ENCODE measurements at regions of chr21 and their contacts with region 1.

Region 1: DNA sequence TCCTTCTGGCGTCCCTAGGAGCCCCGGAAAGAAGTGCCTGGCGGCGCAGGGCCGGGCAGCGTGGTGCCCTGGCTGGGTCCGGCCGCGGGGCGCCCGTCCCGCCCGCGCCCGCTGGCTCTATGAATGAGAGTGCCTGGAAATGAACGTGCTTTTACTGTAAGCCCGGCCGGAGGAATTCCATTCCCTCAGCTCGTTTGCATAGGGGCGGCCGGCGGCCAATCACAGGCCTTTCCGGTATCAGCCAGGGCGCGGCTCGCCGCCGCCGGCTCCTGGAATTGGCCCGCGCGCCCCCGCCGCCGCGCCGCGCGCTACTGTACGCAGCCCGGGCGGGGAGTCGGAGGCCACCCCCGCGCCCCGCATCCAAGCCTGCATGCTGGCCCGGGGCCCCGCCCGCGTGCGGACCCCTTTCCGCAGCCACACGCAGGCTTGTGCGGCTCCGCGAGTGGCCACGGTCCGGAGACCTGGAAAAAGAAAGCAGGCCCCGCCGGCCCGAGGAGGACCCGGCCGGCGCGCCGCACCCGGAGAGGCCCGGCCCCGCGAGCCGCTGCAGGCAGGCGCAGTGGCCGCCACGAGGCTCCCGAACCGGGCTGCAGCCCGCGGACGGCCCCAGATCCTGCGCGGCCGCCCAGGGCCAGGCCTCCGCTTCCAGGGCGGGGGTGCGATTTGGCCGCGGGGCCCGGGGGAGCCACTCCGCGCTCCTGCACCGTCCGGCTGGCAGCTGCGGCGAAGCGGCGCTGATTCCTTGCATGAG is 160.4 kb downstream of the RUNX1 start:
- DNase-seq: peak; percentile 92
- H3K4me3 Mint-ChIP-seq: peak overlapping the region; percentile 89
- H3K27ac Mint-ChIP-seq: peak overlapping the region; percentile 100
- H3K4me1 Mint-ChIP-seq: peaks cover 44% of the 10 kb centered on the region
- H3K27me3 Mint-ChIP-seq: peaks cover 5% of the 10 kb centered on the region

Region 2: GRCh38 chr21:34807146-34807880 is 81.4 kb before region 1 on chr21:
- CTCF ChIA-PET with region 1: interaction called, 3 read pairs
- POLR2A ChIA-PET with region 1: interaction called, 10 read pairs
- intact Hi-C with region 1: loop called (anchors 1 kb)
- DNase-seq: peak; percentile 85
- H3K4me3 Mint-ChIP-seq: peak overlapping the region; percentile 57
- H3K27ac Mint-ChIP-seq: peak overlapping the region; percentile 89
- H3K4me1 Mint-ChIP-seq: peaks cover 89% of the 10 kb centered on the region
- H3K27me3 Mint-ChIP-seq: no peaks in the 10 kb centered on the region

Region 3: DNA sequence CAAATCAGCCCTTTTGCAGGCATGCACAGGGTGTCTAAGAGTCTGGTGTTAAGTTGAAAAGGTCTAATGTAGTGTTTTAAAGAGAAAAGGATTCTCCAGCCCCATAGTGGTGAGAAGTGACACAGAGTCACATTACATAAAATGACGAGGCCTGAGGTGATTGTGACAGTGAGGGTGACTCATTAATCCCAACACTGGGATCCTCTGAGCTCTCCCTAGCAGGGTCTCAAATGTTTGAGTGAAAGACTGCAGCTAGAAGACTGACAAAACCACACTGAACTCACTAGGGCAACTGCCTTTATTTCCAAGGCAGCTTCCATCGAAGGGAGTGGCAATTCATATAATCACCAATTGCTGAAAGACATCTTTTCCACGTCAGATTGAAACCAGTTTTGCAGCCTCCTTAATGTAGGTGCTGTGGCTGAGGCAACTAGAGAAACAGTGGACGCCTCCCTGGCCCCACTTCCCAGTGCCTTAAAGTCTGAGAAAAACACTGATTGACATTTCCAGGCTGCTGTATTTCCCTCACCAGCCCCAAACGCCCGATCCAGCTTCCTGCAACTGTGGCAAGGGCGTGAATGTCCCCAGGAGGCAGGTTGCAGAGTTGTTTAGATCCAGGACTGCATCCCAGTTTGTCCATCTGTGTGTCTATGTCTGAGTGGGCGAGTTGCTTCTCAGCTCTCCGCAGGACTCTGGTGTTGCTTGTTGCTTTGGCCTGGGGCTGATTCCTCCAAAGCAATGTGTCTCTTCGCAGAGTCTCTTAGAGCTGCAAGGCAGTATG is 79.0 kb after region 1 on chr21:
- CTCF ChIA-PET with region 1: interaction called, 22 read pairs
- POLR2A ChIA-PET with region 1: interaction called, 85 read pairs
- intact Hi-C with region 1: loop called (anchors 1 kb)
- DNase-seq: peak; percentile 75
- H3K4me3 Mint-ChIP-seq: peak overlapping the region; percentile 55
- H3K27ac Mint-ChIP-seq: peak overlapping the region; percentile 95
- H3K4me1 Mint-ChIP-seq: peaks cover 88% of the 10 kb centered on the region
- H3K27me3 Mint-ChIP-seq: no peaks in the 10 kb centered on the region

Region 4: DNA sequence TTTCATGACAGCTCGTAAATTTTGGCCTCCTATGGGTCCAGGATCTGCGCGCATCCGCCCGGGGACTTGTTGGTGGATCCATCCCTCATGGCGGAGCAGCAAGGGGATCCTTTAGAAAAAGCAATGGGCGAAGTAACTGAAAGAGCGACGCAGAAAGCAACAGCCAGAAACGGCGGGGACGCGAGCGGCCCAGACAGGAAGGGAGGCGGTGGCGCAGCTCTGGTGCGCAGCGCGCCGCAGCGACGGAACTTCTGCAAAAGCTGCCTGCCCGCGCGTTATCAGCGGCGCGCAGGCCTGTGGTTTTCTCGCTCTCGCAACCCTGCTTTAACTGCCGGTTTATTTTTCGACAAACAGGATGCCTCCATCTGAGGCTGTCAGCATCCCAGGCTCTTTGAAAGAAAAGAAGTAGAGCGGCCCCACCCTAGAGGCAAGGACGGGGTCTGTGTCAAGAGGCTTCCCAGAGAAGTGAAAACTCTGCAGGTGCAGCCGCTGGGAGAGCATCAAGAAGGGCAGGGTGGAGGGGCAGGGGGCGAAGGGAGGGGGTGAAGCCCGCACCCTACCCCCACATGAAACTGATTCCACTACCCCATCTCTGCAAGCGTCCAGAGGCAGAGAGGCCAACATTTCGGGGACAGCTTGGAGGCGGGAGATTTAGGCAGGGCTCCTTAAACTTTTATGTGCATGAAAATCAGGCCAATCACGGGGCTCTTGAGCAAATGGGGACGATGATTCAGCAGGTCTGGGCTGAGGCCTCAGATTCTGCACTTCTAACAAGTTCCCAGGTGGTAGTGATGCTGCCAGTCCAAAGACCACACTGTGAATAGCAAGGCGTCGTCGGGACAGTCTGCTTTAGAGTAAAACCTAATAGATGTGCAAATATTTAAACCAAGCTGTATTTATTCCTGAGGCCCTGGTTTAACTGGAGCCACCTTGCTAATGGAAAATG is 138.1 kb after region 1 on chr21:
- CTCF ChIA-PET with region 1: interaction called, 10 read pairs
- POLR2A ChIA-PET with region 1: interaction called, 29 read pairs
- intact Hi-C with region 1: loop called (anchors 1 kb)
- DNase-seq: peak; percentile 89
- H3K4me3 Mint-ChIP-seq: peak overlapping the region; percentile 75
- H3K27ac Mint-ChIP-seq: peak overlapping the region; percentile 91
- H3K4me1 Mint-ChIP-seq: peaks cover 83% of the 10 kb centered on the region
- H3K27me3 Mint-ChIP-seq: no peaks in the 10 kb centered on the region

Region 5: DNA sequence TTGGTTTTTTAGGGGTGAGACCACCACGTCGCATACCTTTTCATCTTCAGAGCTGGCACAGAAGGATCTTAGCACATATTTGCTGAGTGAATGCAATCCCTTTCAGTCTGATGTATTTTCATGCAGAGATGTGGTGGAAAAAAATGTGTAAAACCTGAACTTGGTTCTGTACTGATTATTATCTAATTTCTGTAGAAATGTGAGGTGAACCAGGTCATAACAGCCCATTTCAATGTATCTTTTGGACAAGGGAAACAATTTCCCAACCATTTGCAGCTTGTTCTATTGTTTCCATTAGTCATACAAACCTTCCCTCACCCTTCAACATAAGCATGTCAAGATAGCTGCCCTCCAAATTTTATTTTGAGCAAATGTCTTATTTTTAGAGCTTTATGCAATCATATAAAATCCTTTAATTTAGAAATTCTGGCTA is 207.1 kb after region 1 on chr21:
- CTCF ChIA-PET with region 1: interaction called, 4 read pairs
- POLR2A ChIA-PET with region 1: interaction called, 23 read pairs
- intact Hi-C with region 1: loop called (anchors 2 kb)
- DNase-seq: peak; percentile 42
- H3K4me3 Mint-ChIP-seq: no peak overlapping the region
- H3K27ac Mint-ChIP-seq: peak overlapping the region; percentile 83
- H3K4me1 Mint-ChIP-seq: peaks cover 48% of the 10 kb centered on the region
- H3K27me3 Mint-ChIP-seq: peaks cover 2% of the 10 kb centered on the region

Region 6: DNA sequence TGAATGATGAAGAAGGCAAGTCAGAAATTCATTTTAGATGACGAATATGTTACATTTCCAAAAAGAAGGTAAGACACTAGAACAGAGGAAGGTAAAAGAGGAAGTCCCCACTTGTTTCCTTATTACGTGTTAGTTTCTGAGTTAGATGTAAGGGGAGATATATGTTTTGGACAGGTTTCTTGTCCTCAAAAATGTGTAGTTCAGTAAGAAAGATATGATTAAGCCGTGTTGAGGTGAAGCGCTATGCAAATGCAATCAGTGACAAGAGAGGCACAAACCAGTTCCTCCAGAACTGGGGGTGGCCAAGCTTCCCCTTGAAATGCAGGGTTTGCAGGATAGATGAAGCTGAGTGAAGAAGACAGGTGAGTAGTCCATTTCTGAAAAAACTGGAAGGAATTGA is 453.7 kb after region 1 on chr21:
- CTCF ChIA-PET with region 1: no interaction called
- POLR2A ChIA-PET with region 1: no interaction called
- intact Hi-C with region 1: loop called (anchors 2 kb)
- DNase-seq: peak; percentile 66
- H3K4me3 Mint-ChIP-seq: peak overlapping the region; percentile 62
- H3K27ac Mint-ChIP-seq: peak overlapping the region; percentile 98
- H3K4me1 Mint-ChIP-seq: peaks cover 52% of the 10 kb centered on the region
- H3K27me3 Mint-ChIP-seq: no peaks in the 10 kb centered on the region